IMR-90 (cell line): ENCODE measurements at regions of chr4 and their contacts with region 1.

Region 1: DNA sequence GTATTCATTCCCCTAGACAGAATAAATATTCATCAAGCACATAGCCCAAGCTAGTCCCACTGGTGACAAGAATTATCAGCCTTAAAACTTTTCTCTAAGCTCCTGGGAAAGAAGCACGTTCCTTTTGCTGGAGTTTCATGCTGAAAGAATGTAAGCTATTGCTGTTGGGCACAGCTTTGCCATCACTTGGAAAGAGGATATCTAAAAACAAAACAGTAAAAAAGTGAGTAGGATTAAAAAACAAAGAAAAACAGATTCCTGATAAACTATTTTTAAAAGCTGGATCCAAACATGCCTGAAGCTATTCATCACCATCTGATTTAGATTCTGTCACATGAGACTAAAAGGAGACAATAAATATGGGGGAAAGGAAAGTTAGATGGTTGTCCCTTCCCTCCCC is 176.8 kb downstream of the SCFD2 start:
- DNase-seq: peak; percentile 73
- ATAC-seq: peak; percentile 79
- H3K4me3 ChIP-seq: no peak overlapping the region
- H3K27ac ChIP-seq: peak overlapping the region; percentile 33
- H3K4me1 ChIP-seq: peaks cover 12% of the 10 kb centered on the region; the same call in 1 of the 2 replicates
- H3K27me3 ChIP-seq: no peaks in the 10 kb centered on the region
- CTCF ChIP-seq: no peak
- POLR2A ChIP-seq: no peak
- RAD21 ChIP-seq: no peak

Region 2: GRCh38 chr4:53119680-53120079 is 69.3 kb before region 1 on chr4:
- CTCF ChIA-PET with region 1: no interaction called
- POLR2A ChIA-PET with region 1: no interaction called
- dilution Hi-C with region 1: no loop called
- in situ Hi-C with region 1: no loop called
- intact Hi-C with region 1: loop called (anchors 5 kb)
- DNase-seq: peak; percentile 75
- ATAC-seq: peak; percentile 97
- H3K4me3 ChIP-seq: no peak overlapping the region
- H3K27ac ChIP-seq: peak overlapping the region; percentile 62; the same call in 1 of the 2 replicates
- H3K4me1 ChIP-seq: peaks cover 13% of the 10 kb centered on the region
- H3K27me3 ChIP-seq: no peaks in the 10 kb centered on the region
- CTCF ChIP-seq: no peak
- POLR2A ChIP-seq: no peak
- RAD21 ChIP-seq: no peak

Region 3: GRCh38 chr4:54255876-54256275 is 1066.9 kb after region 1 on chr4:
- CTCF ChIA-PET with region 1: no interaction called
- POLR2A ChIA-PET with region 1: no interaction called
- dilution Hi-C with region 1: no loop called
- in situ Hi-C with region 1: no loop called
- intact Hi-C with region 1: no loop called
- DNase-seq: peak; percentile 60
- ATAC-seq: no peak; the same call in 1 of the 2 replicates
- H3K4me3 ChIP-seq: no peak overlapping the region
- H3K27ac ChIP-seq: no peak overlapping the region
- H3K4me1 ChIP-seq: peaks cover 18% of the 10 kb centered on the region
- H3K27me3 ChIP-seq: no peaks in the 10 kb centered on the region
- CTCF ChIP-seq: no peak
- POLR2A ChIP-seq: no peak
- RAD21 ChIP-seq: no peak